ENCODE measurements at regions of chr3 and their contacts with region 1.

Region 1: DNA sequence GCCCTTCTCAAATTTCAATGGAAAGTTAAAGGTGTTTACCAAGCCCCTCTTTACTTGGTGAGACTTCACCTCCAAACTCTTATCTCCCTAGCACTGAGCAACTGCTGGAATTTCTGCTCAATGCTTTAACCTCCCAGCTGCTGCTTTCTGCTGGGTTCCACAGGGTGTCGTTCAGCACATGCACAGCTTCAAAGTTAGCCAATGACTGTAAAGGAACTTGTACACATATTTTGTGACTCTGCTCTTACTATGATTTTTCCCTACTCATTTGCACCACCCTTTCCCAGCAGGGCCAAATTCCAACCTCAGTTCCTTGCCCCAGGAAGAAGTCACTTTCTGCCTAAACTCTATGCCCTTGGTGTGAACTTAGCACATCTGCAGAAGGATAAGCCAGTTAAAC is 89.7 kb downstream of the ULK4 start:
- DNase-seq: no peak
- H3K4me3 ChIP-seq: no peak overlapping the region
- H3K27ac ChIP-seq: no peak overlapping the region
- H3K4me1 ChIP-seq: no peaks in the 10 kb centered on the region
- H3K27me3 ChIP-seq: no peaks in the 10 kb centered on the region
- CTCF ChIP-seq: no peak
- POLR2A ChIP-seq: no peak

Region 2: DNA sequence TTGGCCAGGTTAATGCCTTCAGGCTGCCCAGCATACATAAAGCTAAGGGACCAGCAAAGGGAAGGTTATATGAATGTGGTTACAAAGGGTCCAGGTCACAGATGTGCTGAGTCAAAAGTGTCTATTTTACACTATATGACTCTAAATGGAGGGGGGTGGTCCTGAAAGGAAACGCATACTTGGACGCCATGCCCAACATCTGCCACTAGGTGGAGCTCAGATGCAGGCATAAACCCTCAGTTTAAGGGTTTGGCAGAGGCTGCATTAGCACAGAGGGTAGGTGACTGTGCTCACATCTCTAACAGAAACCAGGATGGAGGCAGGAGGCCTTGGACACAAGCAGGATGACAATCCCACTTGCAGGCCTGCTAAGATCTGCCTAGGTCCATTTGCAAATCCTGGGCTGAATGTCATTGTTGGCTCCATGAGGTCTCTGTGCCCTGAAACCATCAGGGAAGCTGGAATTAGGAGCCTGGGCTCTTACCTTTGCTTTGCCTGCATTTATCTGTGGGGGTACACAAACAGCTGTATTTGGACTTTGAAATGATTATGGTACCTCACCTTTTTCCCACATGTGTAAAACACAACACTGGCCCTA is 1291.6 kb before region 1 on chr3:
- intact Hi-C with region 1: loop called (anchors 10 kb)
- DNase-seq: peak; percentile 80
- H3K4me3 ChIP-seq: no peak overlapping the region
- H3K27ac ChIP-seq: no peak overlapping the region
- H3K4me1 ChIP-seq: peaks cover 5% of the 10 kb centered on the region
- H3K27me3 ChIP-seq: no peaks in the 10 kb centered on the region
- CTCF ChIP-seq: peak; percentile 71 to 95 (median 93)
- POLR2A ChIP-seq: no peak

Region 3: GRCh38 chr3:41612853-41613252 is 259.3 kb before region 1 on chr3:
- intact Hi-C with region 1: no loop called
- DNase-seq: no peak
- H3K4me3 ChIP-seq: no peak overlapping the region
- H3K27ac ChIP-seq: no peak overlapping the region
- H3K4me1 ChIP-seq: no peaks in the 10 kb centered on the region
- H3K27me3 ChIP-seq: no peaks in the 10 kb centered on the region
- CTCF ChIP-seq: no peak
- POLR2A ChIP-seq: no peak

Region 4: GRCh38 chr3:42071904-42072592 is 199.9 kb after region 1 on chr3:
- intact Hi-C with region 1: no loop called
- DNase-seq: peak; percentile 65
- H3K4me3 ChIP-seq: no peak overlapping the region
- H3K27ac ChIP-seq: peak overlapping the region in 1 of 2 donors; percentile 70
- H3K4me1 ChIP-seq: peaks cover 49% of the 10 kb centered on the region
- H3K27me3 ChIP-seq: no peaks in the 10 kb centered on the region
- CTCF ChIP-seq: no peak
- POLR2A ChIP-seq: no peak